Tibial artery (tissue), 4 donors: ENCODE measurements at regions of chr2 and their contacts with region 1.

Region 1: GRCh38 chr2:177164584-177165052 is 48.0 kb upstream of the HNRNPA3 start:
- DNase-seq: peak; percentile 83 to 89
- H3K4me3 ChIP-seq: peak overlapping the region; percentile 45 to 50
- H3K27ac ChIP-seq: peak overlapping the region; percentile 87 to 88
- H3K4me1 ChIP-seq: peaks cover 0 to 26% (median 13%) of the 10 kb centered on the region in 4 donors
- H3K27me3 ChIP-seq: no peaks in the 10 kb centered on the region
- CTCF ChIP-seq: peak; percentile 99 to 100

Region 2: GRCh38 chr2:177212106-177212890 is 47.7 kb after region 1 on chr2 and contains the start of gene HNRNPA3:
- intact Hi-C with region 1: loop called (anchors 5 kb)
- DNase-seq: peak; percentile 98 to 100
- H3K4me3 ChIP-seq: peak within 1 kb of the TSS; percentile 76 to 90
- H3K27ac ChIP-seq: peak within 1 kb of the TSS; percentile 97 to 98
- H3K4me1 ChIP-seq: peaks cover 0 to 45% (median 32%) of the 10 kb centered on the region in 4 donors
- H3K27me3 ChIP-seq: no peaks in the 10 kb centered on the region
- CTCF ChIP-seq: peak in 1 of 2 experiments; percentile 24

Region 3: GRCh38 chr2:177263451-177264208 is 99.0 kb after region 1 on chr2:
- intact Hi-C with region 1: loop called (anchors 5 kb)
- DNase-seq: peak; percentile 99
- H3K4me3 ChIP-seq: peak overlapping the region; percentile 70 to 99
- H3K27ac ChIP-seq: peak overlapping the region; percentile 99 to 100
- H3K4me1 ChIP-seq: peaks cover 0 to 53% (median 30%) of the 10 kb centered on the region in 4 donors
- H3K27me3 ChIP-seq: no peaks in the 10 kb centered on the region
- CTCF ChIP-seq: peak; percentile 89 to 91

Region 4: DNA sequence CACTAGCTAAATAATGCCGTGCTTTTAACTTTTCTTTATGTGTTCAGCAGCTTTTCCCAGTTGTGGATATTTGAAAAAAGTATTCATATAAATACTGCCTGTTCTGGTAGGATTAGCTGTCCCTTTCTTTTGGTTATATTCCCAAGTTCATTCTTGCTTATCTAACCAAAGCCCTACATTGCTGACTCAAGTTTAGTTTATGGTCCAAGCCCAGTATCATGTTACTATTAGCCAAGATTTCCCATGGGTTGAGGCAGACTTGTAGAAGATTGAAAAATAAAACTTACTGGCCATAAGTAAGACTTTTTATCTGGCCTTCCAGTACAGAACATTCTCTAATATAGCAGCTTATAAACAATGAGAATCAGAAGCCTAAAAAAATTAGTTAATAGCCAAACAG is 149.6 kb after region 1 on chr2:
- intact Hi-C with region 1: no loop called
- DNase-seq: no peak
- H3K4me3 ChIP-seq: no peak overlapping the region
- H3K27ac ChIP-seq: peak overlapping the region; percentile 63 to 76
- H3K4me1 ChIP-seq: peaks cover 0 to 23% (median 9%) of the 10 kb centered on the region in 4 donors
- H3K27me3 ChIP-seq: no peaks in the 10 kb centered on the region
- CTCF ChIP-seq: no peak

Region 5: DNA sequence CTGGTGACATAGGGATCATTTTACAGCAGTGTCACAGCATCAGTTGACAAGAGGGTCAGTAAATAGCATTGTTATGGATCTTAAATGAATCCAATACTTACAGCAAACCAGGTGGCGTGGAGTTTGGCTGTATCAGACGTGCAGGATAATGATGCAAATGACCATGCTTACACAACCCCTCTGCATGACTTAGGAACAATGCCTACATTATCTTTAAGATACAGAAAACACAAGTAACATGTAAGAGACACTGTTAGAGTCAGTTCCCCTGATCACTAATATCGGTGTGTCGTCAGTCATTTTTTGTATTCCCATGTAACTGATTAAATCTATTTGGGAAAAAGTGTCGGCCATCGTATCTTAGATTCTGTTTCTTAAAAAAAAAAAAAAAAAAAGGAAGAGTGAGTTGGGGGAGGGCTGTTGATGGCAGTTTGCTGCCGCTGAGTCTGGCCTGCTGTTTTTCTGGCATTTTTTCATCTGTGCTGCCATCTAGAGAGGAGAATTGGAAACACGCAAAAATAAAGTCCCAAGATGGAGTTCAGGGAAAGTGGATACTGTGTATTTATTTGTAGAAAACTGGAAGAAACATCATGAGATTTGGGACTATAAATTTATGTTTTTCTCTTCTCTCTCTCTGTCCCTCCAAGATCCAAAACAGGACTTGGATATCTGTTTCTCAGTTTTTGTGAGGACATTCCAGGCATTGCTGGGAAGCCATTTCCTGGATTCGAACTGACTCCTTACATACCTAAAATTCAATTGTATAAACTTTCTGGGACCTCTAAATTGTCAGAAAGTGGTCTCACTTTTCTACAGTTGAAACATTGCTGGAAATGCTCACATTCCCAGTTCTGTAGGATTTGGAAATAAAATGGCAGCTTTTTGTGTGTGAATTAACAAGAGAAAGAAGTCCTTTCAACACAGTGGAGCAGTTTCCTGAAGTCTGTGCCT is 167.7 kb after region 1 on chr2:
- intact Hi-C with region 1: loop called (anchors 2 kb)
- DNase-seq: peak in 1 of 2 donors; percentile 36
- H3K4me3 ChIP-seq: peak overlapping the region; percentile 5 to 13
- H3K27ac ChIP-seq: peak overlapping the region; percentile 62 to 68
- H3K4me1 ChIP-seq: peaks cover 0 to 11% (median 2%) of the 10 kb centered on the region in 4 donors
- H3K27me3 ChIP-seq: no peaks in the 10 kb centered on the region
- CTCF ChIP-seq: peak; percentile 50 to 77

Region 6: DNA sequence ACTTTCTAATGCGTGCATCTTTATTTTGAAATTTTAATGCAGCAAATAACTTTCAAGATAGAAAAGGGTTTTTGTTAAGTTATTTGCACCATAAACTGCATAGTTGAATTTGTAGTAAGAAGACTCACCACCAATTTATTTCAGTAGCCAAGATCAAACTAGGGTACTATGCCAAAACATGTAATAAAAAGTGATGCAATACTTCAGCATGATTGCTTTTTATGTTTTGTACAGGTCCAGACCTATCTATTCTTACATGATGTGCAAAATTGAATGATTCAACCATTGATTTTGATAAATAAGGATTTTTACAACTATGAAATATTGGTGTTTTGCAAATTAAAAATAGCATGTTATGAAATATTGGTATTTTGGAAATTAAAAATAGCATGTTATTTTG is 254.7 kb after region 1 on chr2:
- intact Hi-C with region 1: loop called (anchors 5 kb)
- DNase-seq: no peak
- H3K4me3 ChIP-seq: no peak overlapping the region
- H3K27ac ChIP-seq: no peak overlapping the region
- H3K4me1 ChIP-seq: peaks cover 0 to 31% (median 8%) of the 10 kb centered on the region in 4 donors
- H3K27me3 ChIP-seq: no peaks in the 10 kb centered on the region
- CTCF ChIP-seq: no peak

Region 7: GRCh38 chr2:177618255-177619253 is 453.9 kb after region 1 on chr2:
- intact Hi-C with region 1: loop called (anchors 10 kb)
- DNase-seq: peak; percentile 94
- H3K4me3 ChIP-seq: peak overlapping the region; percentile 71 to 73
- H3K27ac ChIP-seq: peak overlapping the region; percentile 88 to 93
- H3K4me1 ChIP-seq: peaks cover 0 to 5% (median 3%) of the 10 kb centered on the region in 4 donors
- H3K27me3 ChIP-seq: no peaks in the 10 kb centered on the region
- CTCF ChIP-seq: no peak